Heart right ventricle (tissue), 16 donors: ENCODE measurements at regions of chr1 and their contacts with region 1.

Region 1: GRCh38 chr1:234699795-234700665 is 90.1 kb upstream of the IRF2BP2 start:
- DNase-seq: peak in 1 of 2 donors; percentile 62
- ATAC-seq: peak in 7 of 8 donors; percentile 13 to 69 (median 48)
- H3K4me3 ChIP-seq: no peak overlapping the region
- H3K27ac ChIP-seq: peak overlapping the region in 9 of 10 donors; percentile 21 to 67 (median 57)
- H3K4me1 ChIP-seq: peaks cover 0 to 40% (median 14%) of the 10 kb centered on the region in 9 donors
- H3K27me3 ChIP-seq: no peaks in the 10 kb centered on the region
- CTCF ChIP-seq: no peak

Region 2: GRCh38 chr1:234676103-234676594 is 23.9 kb before region 1 on chr1:
- intact Hi-C with region 1: loop called in 1 of 10 experiments (anchors 2 kb)
- DNase-seq: peak; percentile 80 to 91
- ATAC-seq: peak; percentile 92 to 98 (median 97)
- H3K4me3 ChIP-seq: peak overlapping the region; percentile 6 to 54 (median 48)
- H3K27ac ChIP-seq: peak overlapping the region in 9 of 10 donors; percentile 1 to 80 (median 62)
- H3K4me1 ChIP-seq: peaks cover 0 to 11% (median 5%) of the 10 kb centered on the region in 9 donors
- H3K27me3 ChIP-seq: no peaks in the 10 kb centered on the region
- CTCF ChIP-seq: no peak

Region 3: GRCh38 chr1:234683861-234684632 is 16.0 kb before region 1 on chr1:
- intact Hi-C with region 1: loop called in 1 of 10 experiments (anchors 2 kb)
- DNase-seq: peak in 1 of 2 donors; percentile 64
- ATAC-seq: peak; percentile 89 to 99 (median 94)
- H3K4me3 ChIP-seq: no peak overlapping the region
- H3K27ac ChIP-seq: peak overlapping the region in 9 of 10 donors; percentile 36 to 72 (median 65)
- H3K4me1 ChIP-seq: peaks cover 0 to 17% (median 8%) of the 10 kb centered on the region in 9 donors
- H3K27me3 ChIP-seq: no peaks in the 10 kb centered on the region
- CTCF ChIP-seq: no peak